HAP-1 (cell line): ENCODE measurements at regions of chr4 and their contacts with region 1.

Region 1: GRCh38 chr4:24419181-24420034 is 164.9 kb downstream of the DHX15 start:
- DNase-seq: peak; percentile 50 to 84
- H3K4me3 ChIP-seq: no peak overlapping the region
- H3K4me1 ChIP-seq: no peaks in the 10 kb centered on the region
- H3K27me3 ChIP-seq: peaks cover 3% of the 10 kb centered on the region; the same call in 1 of the 2 replicates

Region 2: GRCh38 chr4:23135792-23136645 is 1283.4 kb before region 1 on chr4:
- in situ Hi-C with region 1: loop called (anchors 25 kb)
- DNase-seq: peak; percentile 19 to 33
- H3K4me3 ChIP-seq: no peak overlapping the region
- H3K4me1 ChIP-seq: no peaks in the 10 kb centered on the region
- H3K27me3 ChIP-seq: no peaks in the 10 kb centered on the region

Region 3: DNA sequence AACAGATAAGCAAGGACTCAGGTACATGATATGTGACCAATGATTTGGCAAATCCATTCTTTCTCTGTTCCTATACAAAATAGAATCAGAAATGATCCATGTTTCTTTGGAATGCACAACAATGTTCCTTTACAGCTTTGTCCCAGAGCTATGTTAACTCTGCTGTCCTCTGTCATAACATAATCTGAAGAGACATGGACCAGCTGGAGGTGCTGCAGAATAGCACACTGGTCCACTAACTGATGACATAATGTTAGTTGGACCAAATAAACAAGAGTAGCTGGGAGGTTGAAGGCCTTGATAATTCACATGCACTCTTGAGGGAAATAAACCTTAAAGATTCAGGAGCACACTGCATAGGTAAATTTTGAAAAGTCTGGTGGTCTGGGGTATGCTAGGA is 187.9 kb after region 1 on chr4:
- in situ Hi-C with region 1: no loop called
- DNase-seq: no peak
- H3K4me3 ChIP-seq: no peak overlapping the region
- H3K4me1 ChIP-seq: no peaks in the 10 kb centered on the region
- H3K27me3 ChIP-seq: no peaks in the 10 kb centered on the region